ENCODE measurements at regions of chr3 and their contacts with region 1.

Region 1: GRCh38 chr3:196757876-196758739 is 18.5 kb downstream of the PAK2 start:
- DNase-seq: no peak
- ATAC-seq: peak in 1 of 2 donors; percentile 89

Region 2: DNA sequence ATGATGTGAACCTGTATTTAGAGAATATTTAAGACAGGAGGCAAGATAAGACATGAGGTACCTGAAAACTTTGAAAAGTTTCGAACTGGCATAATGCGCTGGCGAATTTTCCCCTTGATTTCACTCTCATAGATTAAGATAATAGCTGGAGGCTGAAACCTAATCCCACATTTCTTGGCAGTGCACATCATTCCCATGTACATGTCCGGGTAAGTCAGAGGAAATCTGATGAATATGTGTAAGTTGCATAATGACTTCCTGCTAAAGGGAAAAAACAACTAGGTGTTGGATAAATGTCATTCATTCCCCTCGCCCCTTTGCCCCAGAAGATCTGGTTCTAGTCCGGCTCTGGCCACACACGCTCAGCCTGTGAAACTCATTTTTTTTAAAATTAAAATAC is 49.6 kb before region 1 on chr3:
- intact Hi-C with region 1: no loop called
- DNase-seq: no peak
- ATAC-seq: no peak

Region 3: GRCh38 chr3:196803891-196804468 is 45.9 kb after region 1 on chr3:
- intact Hi-C with region 1: loop called in 1 of 2 experiments (anchors 10 kb)
- DNase-seq: no peak
- ATAC-seq: no peak

Measured in left cardiac atrium (tissue), 4 donors.